ENCODE measurements at regions of chr6 and their contacts with region 1.

Region 1: DNA sequence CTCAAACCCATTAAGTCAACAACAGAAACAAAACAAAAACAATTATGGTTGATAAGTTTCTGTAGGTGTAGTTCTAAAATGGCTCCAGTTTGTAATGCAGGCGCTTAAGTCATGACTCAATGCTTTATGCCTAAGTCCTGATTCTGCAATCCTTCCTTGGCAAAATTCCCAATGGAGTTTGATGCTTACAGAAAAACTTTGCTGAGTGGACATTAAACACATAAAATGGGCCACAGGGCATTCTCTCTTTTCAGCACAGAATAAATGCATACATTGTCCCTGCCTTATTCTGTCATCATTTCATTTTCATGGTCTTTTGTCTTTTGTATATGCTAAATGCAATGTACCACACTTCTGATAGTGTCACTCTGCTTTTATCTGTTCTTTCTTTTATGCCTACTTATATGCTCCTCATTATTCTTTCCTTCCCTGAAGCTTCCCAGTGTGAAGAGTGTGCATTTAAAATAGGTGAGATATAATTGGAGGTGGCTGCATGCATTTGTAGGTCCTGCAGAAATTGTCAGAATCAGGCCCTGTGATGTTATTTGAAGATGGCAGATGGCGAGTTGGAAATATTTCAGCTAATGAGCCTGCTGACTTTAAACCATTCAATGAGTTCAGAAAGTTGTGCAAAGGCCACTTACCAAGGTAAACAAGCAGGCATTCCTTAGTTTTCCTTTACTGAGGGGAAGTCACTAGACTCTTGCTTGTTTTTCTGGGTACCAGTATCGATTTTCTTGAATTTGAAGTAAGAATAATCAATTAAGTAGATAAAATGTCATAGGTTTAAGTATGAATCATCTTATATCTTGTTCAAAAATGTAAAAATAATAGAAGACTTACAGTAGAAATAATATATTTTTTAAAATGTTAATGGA is 313.1 kb downstream of the TRDN start:
- DNase-seq: no peak
- H3K4me3 ChIP-seq: no peak overlapping the region
- H3K27ac ChIP-seq: no peak overlapping the region
- H3K4me1 ChIP-seq: no peaks in the 10 kb centered on the region
- H3K27me3 ChIP-seq: no peaks in the 10 kb centered on the region
- CTCF ChIP-seq: no peak
- POLR2A ChIP-seq: no peak

Region 2: GRCh38 chr6:123042401-123042800 is 281.3 kb before region 1 on chr6:
- intact Hi-C with region 1: no loop called
- DNase-seq: no peak
- H3K4me3 ChIP-seq: no peak overlapping the region
- H3K27ac ChIP-seq: no peak overlapping the region
- H3K4me1 ChIP-seq: no peaks in the 10 kb centered on the region
- H3K27me3 ChIP-seq: no peaks in the 10 kb centered on the region
- CTCF ChIP-seq: no peak
- POLR2A ChIP-seq: no peak

Region 3: GRCh38 chr6:123338394-123338793 is 14.7 kb after region 1 on chr6:
- intact Hi-C with region 1: loop called (anchors 2 kb)
- DNase-seq: no peak
- H3K4me3 ChIP-seq: no peak overlapping the region
- H3K27ac ChIP-seq: no peak overlapping the region
- H3K4me1 ChIP-seq: no peaks in the 10 kb centered on the region
- H3K27me3 ChIP-seq: no peaks in the 10 kb centered on the region
- CTCF ChIP-seq: no peak
- POLR2A ChIP-seq: no peak

Measured in vagina (tissue), 2 donors.